Activated CD4-positive, alpha-beta memory T cell treated with anti-CD3 and anti-CD28 coated beads, Interleukin-2, amount 10 ng/mL, durations not matched to agents 7 days and 5 days (primary cell): ENCODE measurements at regions of chr14 and their contacts with region 1.

Region 1: GRCh38 chr14:105045710-105046326 is 19.4 kb downstream of the GPR132 start:
- DNase-seq: peak; percentile 94
- H3K4me3 Mint-ChIP-seq: no peak overlapping the region
- H3K27ac Mint-ChIP-seq: peak overlapping the region; percentile 50
- H3K4me1 Mint-ChIP-seq: peaks cover 17% of the 10 kb centered on the region
- H3K27me3 Mint-ChIP-seq: peaks cover 5% of the 10 kb centered on the region

Region 2: GRCh38 chr14:104953896-104954656 is 91.7 kb before region 1 on chr14:
- CTCF ChIA-PET with region 1: no interaction called
- POLR2A ChIA-PET with region 1: no interaction called
- DNase-seq: no peak
- H3K4me3 Mint-ChIP-seq: no peak overlapping the region
- H3K27ac Mint-ChIP-seq: no peak overlapping the region
- H3K4me1 Mint-ChIP-seq: no peaks in the 10 kb centered on the region
- H3K27me3 Mint-ChIP-seq: peaks cover 4% of the 10 kb centered on the region

Region 3: GRCh38 chr14:104976198-104977007 is 69.4 kb before region 1 on chr14:
- CTCF ChIA-PET with region 1: interaction called, 73 read pairs
- POLR2A ChIA-PET with region 1: interaction called, 8 read pairs
- DNase-seq: peak; percentile 87
- H3K4me3 Mint-ChIP-seq: no peak overlapping the region
- H3K27ac Mint-ChIP-seq: no peak overlapping the region
- H3K4me1 Mint-ChIP-seq: peaks cover 14% of the 10 kb centered on the region
- H3K27me3 Mint-ChIP-seq: peaks cover 30% of the 10 kb centered on the region

Region 4: GRCh38 chr14:105013150-105013785 is 32.5 kb before region 1 on chr14:
- CTCF ChIA-PET with region 1: interaction called, 59 read pairs
- POLR2A ChIA-PET with region 1: interaction called, 52 read pairs
- DNase-seq: no peak
- H3K4me3 Mint-ChIP-seq: no peak overlapping the region
- H3K27ac Mint-ChIP-seq: peak overlapping the region; percentile 75
- H3K4me1 Mint-ChIP-seq: peaks cover 63% of the 10 kb centered on the region
- H3K27me3 Mint-ChIP-seq: no peaks in the 10 kb centered on the region

Region 5: GRCh38 chr14:105020815-105021655 is 24.8 kb before region 1 on chr14 and contains the start of gene CDCA4:
- CTCF ChIA-PET with region 1: interaction called, 59 read pairs
- POLR2A ChIA-PET with region 1: interaction called, 52 read pairs
- DNase-seq: peak; percentile 98
- H3K4me3 Mint-ChIP-seq: peak within 1 kb of the TSS; percentile 96
- H3K27ac Mint-ChIP-seq: peak within 1 kb of the TSS; percentile 94
- H3K4me1 Mint-ChIP-seq: peaks cover 77% of the 10 kb centered on the region
- H3K27me3 Mint-ChIP-seq: no peaks in the 10 kb centered on the region
- total RNA-seq, gene CDCA4: 57.1 to 57.5 TPM

Region 6: DNA sequence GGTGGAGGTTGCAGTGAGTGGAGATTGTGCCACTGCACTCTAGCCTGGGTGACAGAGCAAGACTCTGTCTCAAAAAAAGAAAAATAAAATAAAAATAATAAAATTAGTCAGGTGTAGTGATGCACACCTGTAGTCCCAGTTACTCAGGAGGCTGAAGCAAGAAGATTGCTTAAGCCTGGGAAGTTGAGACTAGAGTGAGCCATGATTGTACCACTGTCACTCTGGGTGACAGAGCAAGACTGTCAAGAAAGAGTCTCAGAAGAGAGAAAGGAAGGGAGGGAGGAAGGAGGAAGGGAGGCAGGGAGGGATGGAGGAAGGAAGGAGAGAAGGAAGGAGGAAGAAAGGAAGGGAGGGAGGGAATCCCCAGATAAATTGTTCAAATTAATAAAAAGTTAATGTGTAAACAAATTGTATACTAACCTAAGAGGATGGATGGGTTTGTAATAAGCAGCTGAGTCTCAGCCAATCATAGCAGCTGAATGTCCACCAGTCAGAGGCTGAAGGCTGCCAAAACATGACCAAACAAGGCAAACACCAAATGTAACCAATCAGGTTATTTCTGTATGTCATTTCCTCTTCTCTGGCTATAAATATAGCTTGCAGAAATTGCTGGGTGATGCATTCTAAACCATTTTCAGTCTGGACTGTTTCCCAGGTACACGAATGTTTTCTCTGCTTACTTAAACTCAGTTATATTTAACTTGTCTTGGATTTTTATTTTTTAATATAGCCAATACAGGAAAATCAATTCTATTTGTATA is 18.8 kb before region 1 on chr14:
- CTCF ChIA-PET with region 1: interaction called, 59 read pairs
- POLR2A ChIA-PET with region 1: interaction called, 52 read pairs
- DNase-seq: no peak
- H3K4me3 Mint-ChIP-seq: no peak overlapping the region
- H3K27ac Mint-ChIP-seq: peak overlapping the region; percentile 90
- H3K4me1 Mint-ChIP-seq: peaks cover 51% of the 10 kb centered on the region
- H3K27me3 Mint-ChIP-seq: no peaks in the 10 kb centered on the region

Region 7: GRCh38 chr14:105034314-105035039 is 11.3 kb before region 1 on chr14:
- CTCF ChIA-PET with region 1: interaction called, 27 read pairs
- POLR2A ChIA-PET with region 1: interaction called, 5 read pairs
- DNase-seq: no peak
- H3K4me3 Mint-ChIP-seq: no peak overlapping the region
- H3K27ac Mint-ChIP-seq: no peak overlapping the region
- H3K4me1 Mint-ChIP-seq: peaks cover 17% of the 10 kb centered on the region
- H3K27me3 Mint-ChIP-seq: peaks cover 8% of the 10 kb centered on the region

Region 8: GRCh38 chr14:105065280-105066228 is 19.7 kb after region 1 on chr14 and contains the start of gene GPR132:
- CTCF ChIA-PET with region 1: interaction called, 70 read pairs
- POLR2A ChIA-PET with region 1: interaction called, 6 read pairs
- DNase-seq: peak; percentile 94
- H3K4me3 Mint-ChIP-seq: peak within 1 kb of the TSS; percentile 89
- H3K27ac Mint-ChIP-seq: peak within 1 kb of the TSS; percentile 87
- H3K4me1 Mint-ChIP-seq: peaks cover 71% of the 10 kb centered on the region
- H3K27me3 Mint-ChIP-seq: no peaks in the 10 kb centered on the region
- total RNA-seq, gene GPR132: 51.2 to 51.4 TPM